ENCODE measurements at regions of chr9 and their contacts with region 1.

Region 1: DNA sequence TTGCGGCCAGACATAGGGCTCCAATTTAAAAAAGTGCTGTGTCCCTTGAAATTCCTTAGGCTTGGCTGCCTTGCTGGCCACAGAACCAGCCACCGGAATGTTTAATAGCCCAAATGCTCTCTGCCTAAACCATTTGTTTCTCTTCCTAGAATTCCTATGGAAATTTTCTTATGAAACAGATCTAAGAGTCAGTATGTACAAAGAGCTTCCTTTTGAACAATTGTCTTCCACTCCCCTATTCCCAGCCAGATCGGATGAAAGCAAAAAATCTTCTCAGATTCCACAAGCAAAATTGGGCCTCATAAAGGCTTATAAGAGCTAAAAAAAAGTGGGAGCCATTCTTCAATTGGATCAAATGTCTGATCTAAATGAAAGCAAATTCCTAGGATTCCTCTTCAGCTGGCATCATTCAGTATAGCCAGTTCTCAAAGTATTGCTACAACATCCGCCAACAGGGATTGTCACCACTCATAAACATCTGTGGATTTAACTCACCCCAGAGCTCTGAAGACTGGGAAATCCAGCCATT is 104.3 kb downstream of the CEMIP2 start:
- DNase-seq: peak in 1 of 2 experiments; percentile 45
- H3K4me3 ChIP-seq: no peak overlapping the region
- H3K27ac ChIP-seq: no peak overlapping the region
- H3K4me1 ChIP-seq: no peaks in the 10 kb centered on the region; the same call in 1 of the 2 replicates
- H3K27me3 ChIP-seq: no peaks in the 10 kb centered on the region
- CTCF ChIP-seq: no peak

Region 2: DNA sequence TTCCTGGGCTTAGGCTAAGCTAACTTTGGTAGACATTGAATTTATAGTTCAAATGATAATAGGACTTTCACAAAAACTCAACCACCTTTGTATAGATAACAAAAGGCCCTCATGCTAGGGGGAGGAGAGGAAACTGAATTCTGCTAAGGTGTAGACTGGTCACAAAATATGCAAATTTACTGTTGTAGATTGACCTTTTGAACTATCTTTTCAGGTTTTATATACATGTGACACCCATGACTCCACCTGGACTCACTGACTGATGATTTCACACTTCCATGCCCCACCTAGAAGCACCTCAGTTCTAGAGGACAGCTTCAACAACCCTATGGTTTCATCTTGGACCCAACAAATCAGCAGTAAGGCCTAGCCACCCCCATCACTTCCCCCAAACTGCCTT is 61.3 kb before region 1 on chr9:
- CTCF ChIA-PET with region 1: no interaction called
- POLR2A ChIA-PET with region 1: no interaction called
- intact Hi-C with region 1: no loop called
- DNase-seq: no peak
- H3K4me3 ChIP-seq: no peak overlapping the region
- H3K27ac ChIP-seq: no peak overlapping the region
- H3K4me1 ChIP-seq: no peaks in the 10 kb centered on the region
- H3K27me3 ChIP-seq: no peaks in the 10 kb centered on the region
- CTCF ChIP-seq: no peak

Region 3: GRCh38 chr9:71628247-71628646 is 35.7 kb before region 1 on chr9:
- CTCF ChIA-PET with region 1: no interaction called
- POLR2A ChIA-PET with region 1: no interaction called
- intact Hi-C with region 1: loop called (anchors 5 kb)
- DNase-seq: no peak
- H3K4me3 ChIP-seq: no peak overlapping the region
- H3K27ac ChIP-seq: no peak overlapping the region
- H3K4me1 ChIP-seq: peaks cover 7% of the 10 kb centered on the region; the same call in 1 of the 2 replicates
- H3K27me3 ChIP-seq: no peaks in the 10 kb centered on the region
- CTCF ChIP-seq: peak; percentile 49; the same call in 1 of the 2 replicates